OCI-LY7 (cell line): ENCODE measurements at regions of chr17 and their contacts with region 1.

Region 1: GRCh38 chr17:8300627-8301242 is 5.5 kb upstream of the SLC25A35 start:
- DNase-seq: peak; percentile 87
- H3K4me3 ChIP-seq: no peak overlapping the region
- H3K27ac ChIP-seq: peak overlapping the region; percentile 4
- H3K4me1 ChIP-seq: peaks cover 6% of the 10 kb centered on the region
- CTCF ChIP-seq: peak; percentile 94

Region 2: GRCh38 chr17:7931709-7932482 is 368.8 kb before region 1 on chr17 and contains the starts of genes CNTROB and TRAPPC1:
- CTCF ChIA-PET with region 1: no interaction called
- POLR2A ChIA-PET with region 1: no interaction called
- intact Hi-C with region 1: no loop called
- DNase-seq: peak; percentile 99
- H3K4me3 ChIP-seq: peak within 1 kb of the TSS; percentile 99
- H3K27ac ChIP-seq: peak within 1 kb of the TSS; percentile 69
- H3K4me1 ChIP-seq: peaks cover 27% of the 10 kb centered on the region
- CTCF ChIP-seq: no peak
- total RNA-seq, gene CNTROB: 49.1 and 55.4 TPM in 2 replicates
- total RNA-seq, gene TRAPPC1: 40.2 and 41.0 TPM in 2 replicates

Region 3: DNA sequence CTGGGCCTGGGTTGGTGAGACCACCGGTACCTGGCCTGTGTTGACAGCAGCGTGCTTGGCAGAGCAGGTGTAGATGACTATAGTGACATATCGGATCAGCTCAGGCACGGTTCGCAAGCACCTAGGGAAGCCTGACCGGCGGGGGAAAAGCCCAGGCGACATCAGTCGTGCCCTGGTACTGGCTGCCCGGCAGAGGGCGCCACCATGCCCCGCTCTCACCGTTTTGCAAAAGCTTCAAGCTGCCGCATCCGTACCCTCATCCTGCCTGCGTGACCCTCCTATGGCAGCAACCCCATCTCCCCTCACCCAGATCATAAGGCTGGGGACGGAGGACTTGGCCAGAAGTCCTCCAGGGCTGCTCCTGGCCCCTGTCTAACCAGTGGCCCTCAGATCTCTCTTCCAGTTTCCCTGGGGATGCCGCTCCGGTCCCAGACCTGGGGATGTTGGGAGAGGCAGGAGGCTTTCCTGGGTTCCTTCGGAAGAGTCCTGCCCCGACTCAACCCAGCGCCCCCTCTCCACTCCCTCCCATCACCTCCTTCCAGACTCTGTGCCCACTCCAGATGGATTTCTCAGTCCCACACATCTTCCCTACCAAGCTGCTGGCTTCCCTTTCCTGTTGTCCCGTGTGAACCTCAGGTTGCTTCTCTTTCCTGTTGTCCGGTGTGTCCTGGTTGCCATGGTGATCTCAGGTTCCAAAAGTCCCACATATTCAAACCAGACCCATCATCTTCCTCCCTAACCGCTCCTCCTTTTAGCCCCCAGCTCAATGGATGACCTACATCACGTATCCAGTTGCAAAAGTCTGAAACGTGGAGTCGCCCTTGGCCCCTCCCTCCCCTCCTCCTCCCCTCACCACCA is 226.9 kb before region 1 on chr17:
- CTCF ChIA-PET with region 1: no interaction called
- POLR2A ChIA-PET with region 1: no interaction called
- intact Hi-C with region 1: loop called (anchors 5 kb)
- DNase-seq: peak; percentile 83
- H3K4me3 ChIP-seq: no peak overlapping the region
- H3K27ac ChIP-seq: no peak overlapping the region
- H3K4me1 ChIP-seq: peaks cover 4% of the 10 kb centered on the region
- CTCF ChIP-seq: peak; percentile 92

Region 4: DNA sequence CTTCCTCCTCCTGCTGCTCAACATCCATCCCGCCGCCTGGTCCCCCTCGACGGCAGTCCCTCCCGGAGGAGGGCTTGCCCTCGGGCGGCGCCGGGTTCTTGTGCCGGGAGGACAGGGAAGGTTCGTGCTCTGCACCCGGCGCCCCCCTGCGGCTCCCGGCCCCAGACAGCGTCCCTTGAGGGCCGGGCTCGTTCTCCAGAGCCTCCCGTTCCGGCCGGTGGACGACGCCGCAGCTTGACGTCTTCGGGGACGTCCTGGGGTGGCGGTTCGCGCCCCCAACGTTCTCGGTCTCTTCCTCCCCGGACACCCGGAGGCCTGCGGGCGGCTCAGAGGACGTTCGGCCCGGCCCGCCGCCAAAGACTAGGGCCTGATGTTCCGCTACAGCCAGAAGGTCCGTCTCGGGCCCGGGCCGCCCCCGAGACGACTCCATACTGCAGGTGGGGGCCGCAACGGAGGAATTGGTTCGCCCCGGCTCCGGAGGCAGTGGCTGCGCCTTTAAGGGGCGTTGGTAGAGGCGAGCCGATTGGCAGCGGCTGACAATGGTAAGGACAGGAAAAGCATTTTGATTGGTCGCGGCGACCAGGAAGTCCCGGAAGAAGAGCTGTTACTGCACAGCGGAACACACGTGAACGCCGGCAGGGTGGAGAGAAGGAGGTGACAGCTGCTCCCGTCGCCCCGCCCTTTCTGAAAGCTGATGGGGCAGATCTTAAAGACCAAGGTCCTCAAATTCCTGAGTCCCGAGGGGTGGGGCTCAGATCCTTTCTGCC is 110.8 kb before region 1 on chr17 and contains the start of gene BORCS6:
- CTCF ChIA-PET with region 1: interaction called, 4 read pairs
- POLR2A ChIA-PET with region 1: interaction called, 6 read pairs
- intact Hi-C with region 1: loop called (anchors 1 kb)
- DNase-seq: peak; percentile 99
- H3K4me3 ChIP-seq: peak within 1 kb of the TSS; percentile 83
- H3K27ac ChIP-seq: peak within 1 kb of the TSS; percentile 92
- H3K4me1 ChIP-seq: peaks cover 39% of the 10 kb centered on the region
- CTCF ChIP-seq: peak; percentile 52
- total RNA-seq, gene BORCS6: 13.9 and 14.3 TPM in 2 replicates

Region 5: DNA sequence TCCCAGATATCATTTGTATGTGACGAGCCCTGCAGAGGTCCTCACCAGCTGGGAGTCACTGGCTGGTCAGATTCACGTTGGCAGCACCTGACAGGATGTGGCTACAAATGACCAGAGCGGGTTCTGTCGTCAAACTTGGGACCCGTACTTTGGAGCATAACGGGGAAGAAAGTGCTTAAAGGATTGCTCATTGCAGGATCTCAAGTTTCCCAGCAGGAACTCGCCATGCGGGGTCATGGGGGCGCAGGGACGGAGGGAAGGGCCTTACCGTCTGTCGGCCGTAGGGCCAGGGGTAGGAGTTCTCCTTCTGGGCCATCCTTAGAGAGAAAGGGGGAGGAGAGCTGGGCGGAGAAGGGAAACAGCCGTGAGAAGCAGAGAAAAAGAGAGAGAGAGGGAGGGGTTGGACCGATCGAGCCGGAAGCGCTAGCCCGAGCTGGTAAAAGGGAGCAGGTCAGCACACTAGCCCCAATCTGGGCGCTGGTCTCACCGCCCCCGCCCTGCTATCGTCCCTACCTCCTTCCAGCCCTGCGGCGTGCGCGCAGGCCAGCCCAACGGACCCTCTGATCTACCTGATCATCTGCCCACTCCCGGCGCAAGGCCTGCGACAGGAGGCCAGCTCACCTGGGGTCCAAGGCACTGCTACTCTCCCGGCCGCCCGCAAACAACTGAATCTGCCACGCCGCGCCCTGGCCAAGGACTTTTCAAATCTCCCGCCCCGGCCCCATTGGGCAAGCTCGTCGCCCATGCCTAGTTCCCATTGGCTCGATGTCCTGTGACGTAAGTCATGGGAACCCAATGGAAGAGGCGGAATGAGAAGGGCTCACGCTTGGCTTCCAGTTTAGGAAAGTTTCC is 90.6 kb before region 1 on chr17 and contains the start of gene AURKB:
- CTCF ChIA-PET with region 1: no interaction called
- POLR2A ChIA-PET with region 1: interaction called, 5 read pairs
- intact Hi-C with region 1: loop called (anchors 1 kb)
- DNase-seq: peak; percentile 96
- H3K4me3 ChIP-seq: peak within 1 kb of the TSS; percentile 92
- H3K27ac ChIP-seq: peak within 1 kb of the TSS; percentile 88
- H3K4me1 ChIP-seq: peaks cover 19% of the 10 kb centered on the region
- CTCF ChIP-seq: no peak
- total RNA-seq, gene AURKB: 248 and 283 TPM in 2 replicates